ENCODE measurements at regions of chr17 and their contacts with region 1.

Region 1: DNA sequence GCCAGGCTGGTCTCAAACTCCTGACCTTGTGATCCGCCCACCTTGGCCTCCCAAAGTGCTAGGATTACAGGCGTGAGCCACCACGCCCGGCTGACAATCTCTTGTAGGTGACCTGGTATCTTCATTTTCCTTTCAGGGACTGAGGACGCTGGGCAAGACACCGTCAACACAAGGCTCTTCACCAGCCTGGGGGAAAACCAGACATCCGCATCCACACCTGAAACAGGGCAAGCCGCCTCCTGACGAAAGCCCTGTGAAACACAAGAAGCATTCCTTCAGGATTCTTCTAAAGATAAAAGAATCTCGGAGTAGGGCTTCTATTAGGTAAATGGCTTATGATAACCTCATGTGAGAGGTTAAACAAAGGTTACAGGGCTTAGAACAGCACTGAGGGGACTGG is 48.3 kb downstream of the DHRS7C start:
- DNase-seq: no peak
- H3K4me3 Mint-ChIP-seq: no peak overlapping the region
- H3K27ac Mint-ChIP-seq: no peak overlapping the region
- H3K4me1 Mint-ChIP-seq: no peaks in the 10 kb centered on the region
- H3K27me3 Mint-ChIP-seq: peaks cover 1% of the 10 kb centered on the region

Region 2: DNA sequence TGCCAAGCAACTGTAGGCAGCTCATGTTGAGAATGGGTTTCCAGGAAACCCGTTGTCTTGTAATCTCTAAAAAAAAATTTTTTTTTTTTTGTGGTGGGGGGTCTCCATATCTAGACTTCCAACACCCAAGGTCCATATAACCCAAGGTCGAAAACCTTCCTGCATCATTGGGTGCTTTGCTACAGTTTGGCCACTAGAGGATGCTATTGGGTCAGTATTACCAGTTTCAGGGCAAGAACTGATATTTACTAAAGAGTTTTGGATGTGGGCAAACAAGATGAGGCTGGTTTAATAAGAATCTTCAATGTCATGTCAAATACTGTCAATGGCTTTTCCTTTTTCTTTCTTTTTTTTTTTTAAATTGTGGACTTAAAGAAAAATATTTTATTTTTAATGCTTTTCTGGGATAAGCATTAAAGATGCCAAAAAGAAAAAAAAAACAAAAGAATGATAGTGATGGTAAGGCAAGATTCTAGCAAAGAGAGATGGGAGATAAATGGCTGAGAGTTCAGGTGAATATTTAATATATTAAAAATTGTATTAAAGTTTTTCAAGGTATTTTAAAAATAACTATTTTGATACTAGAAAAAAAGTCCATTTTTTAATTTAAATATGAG is 14.0 kb before region 1 on chr17:
- CTCF ChIA-PET with region 1: interaction called, 11 read pairs
- POLR2A ChIA-PET with region 1: no interaction called
- DNase-seq: peak; percentile 19
- H3K4me3 Mint-ChIP-seq: no peak overlapping the region
- H3K27ac Mint-ChIP-seq: no peak overlapping the region
- H3K4me1 Mint-ChIP-seq: no peaks in the 10 kb centered on the region
- H3K27me3 Mint-ChIP-seq: peaks cover 2% of the 10 kb centered on the region

Measured in activated CD4-positive, alpha-beta memory T cell treated with anti-CD3 and anti-CD28 coated beads, Interleukin-2, amount 10 ng/mL, durations not matched to agents 7 days and 5 days (primary cell).